ENCODE measurements at regions of chr12 and their contacts with region 1.

Region 1: DNA sequence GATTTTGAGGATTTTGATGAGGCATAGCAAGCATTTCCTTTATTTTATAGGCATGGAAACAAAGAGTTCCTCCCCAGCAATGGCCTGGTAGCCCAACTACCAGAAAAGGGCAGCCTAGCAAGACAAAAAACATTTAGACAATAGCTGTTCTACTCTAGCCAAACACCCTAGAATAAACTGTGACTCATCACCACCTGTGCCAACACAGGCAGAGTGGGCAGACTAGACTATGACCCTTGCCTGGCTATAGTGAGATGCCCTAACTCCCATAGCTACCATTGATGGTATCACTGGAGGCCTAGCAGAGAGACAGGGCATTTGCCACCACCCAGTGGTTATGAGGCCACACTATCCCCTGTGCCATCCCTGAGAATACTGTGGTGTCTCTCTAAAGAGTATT is 15.5 kb upstream of the CCER1 start:
- DNase-seq: no peak
- ATAC-seq: no peak
- H3K4me3 ChIP-seq: no peak overlapping the region
- H3K27ac ChIP-seq: no peak overlapping the region
- H3K4me1 ChIP-seq: no peaks in the 10 kb centered on the region
- H3K27me3 ChIP-seq: no peaks in the 10 kb centered on the region
- CTCF ChIP-seq: no peak
- POLR2A ChIP-seq: no peak

Region 2: DNA sequence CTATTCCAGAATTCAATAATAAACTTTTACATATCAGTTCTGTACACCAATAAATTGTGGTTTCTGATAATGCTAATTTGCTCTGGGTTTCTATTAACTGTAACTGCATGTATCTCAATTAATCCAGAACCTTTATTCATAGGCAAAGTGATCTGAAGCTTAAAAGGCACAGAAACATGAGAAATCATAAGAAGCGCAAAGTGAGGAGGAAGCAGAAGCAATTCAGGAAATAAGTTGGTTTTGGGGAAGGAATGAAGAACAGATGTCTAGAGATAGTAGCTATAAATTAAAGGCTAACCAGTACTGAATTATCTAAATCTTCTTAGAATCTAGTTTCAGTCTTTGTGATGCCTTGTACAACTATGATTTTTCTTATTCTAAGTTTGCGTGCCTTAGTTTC is 62.8 kb after region 1 on chr12:
- intact Hi-C with region 1: no loop called
- DNase-seq: no peak
- ATAC-seq: no peak
- H3K4me3 ChIP-seq: no peak overlapping the region
- H3K27ac ChIP-seq: no peak overlapping the region
- H3K4me1 ChIP-seq: no peaks in the 10 kb centered on the region
- H3K27me3 ChIP-seq: no peaks in the 10 kb centered on the region
- CTCF ChIP-seq: no peak
- POLR2A ChIP-seq: no peak

Region 3: DNA sequence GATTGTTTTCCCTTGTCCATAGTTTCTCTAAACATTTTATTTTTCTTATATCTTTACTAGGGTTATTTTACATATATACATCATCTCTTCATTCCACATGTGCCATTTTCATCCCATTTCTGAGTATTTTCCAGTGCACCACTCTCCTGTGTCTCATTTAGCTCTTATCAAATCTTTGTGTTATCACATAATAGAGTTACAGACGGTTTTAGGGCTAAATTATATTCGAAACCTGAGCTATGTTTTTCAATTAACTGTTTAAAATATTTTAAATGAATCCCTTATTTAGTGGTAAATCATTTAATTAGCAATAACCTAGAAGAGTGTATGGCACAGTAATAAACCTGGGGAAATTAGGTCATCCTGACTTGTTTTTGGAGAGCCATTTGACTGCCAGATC is 372.5 kb after region 1 on chr12:
- intact Hi-C with region 1: loop called in 1 of 10 experiments (anchors 5 kb)
- DNase-seq: no peak
- ATAC-seq: no peak
- H3K4me3 ChIP-seq: no peak overlapping the region
- H3K27ac ChIP-seq: no peak overlapping the region
- H3K4me1 ChIP-seq: no peaks in the 10 kb centered on the region
- H3K27me3 ChIP-seq: no peaks in the 10 kb centered on the region
- CTCF ChIP-seq: no peak
- POLR2A ChIP-seq: no peak